ENCODE measurements at regions of chr1 and their contacts with region 1.

Region 1: DNA sequence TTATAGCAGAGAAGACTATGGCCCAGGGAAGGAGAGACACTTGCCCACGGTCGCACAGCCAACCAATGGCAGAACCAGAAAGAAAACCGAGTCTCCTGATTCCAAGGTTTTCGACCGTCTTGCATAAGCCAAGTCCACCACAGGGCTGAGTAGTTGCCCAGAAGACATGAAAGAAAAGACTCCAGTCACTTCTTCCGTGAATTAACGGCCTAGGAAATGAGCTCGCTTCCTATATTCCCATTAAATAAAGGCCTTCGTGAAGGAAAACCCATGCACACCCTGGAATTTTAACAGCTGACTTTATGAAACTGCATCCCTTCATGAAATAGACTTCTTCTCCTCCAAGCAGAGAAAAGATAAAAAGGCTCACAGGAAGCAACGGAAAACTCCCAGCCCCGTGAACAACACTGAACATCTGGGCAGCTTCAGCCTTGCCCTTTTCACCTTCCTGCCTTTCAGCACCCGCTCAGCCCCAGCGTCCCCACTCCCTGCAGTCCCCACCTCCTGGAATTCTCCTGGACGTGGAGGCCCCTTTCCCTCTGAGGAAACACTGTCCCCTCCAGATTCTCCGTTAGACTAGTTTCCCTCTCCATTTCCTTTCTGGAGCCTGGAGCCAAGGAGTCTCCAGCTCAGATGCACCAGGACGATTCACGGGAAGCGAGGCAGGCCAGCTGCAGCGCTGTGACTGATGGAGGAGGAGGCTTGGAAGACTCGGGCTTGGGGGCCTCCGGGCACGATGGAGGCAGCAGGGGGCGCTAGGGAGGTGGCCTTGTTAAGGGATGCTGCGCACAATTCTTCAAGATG is 2.7 kb upstream of the MYOC start:
- DNase-seq: peak; percentile 83
- H3K4me3 ChIP-seq: no peak overlapping the region
- H3K27ac ChIP-seq: no peak overlapping the region
- H3K4me1 ChIP-seq: peaks cover 4% of the 10 kb centered on the region
- H3K27me3 ChIP-seq: no peaks in the 10 kb centered on the region
- CTCF ChIP-seq: peak; percentile 95

Region 2: DNA sequence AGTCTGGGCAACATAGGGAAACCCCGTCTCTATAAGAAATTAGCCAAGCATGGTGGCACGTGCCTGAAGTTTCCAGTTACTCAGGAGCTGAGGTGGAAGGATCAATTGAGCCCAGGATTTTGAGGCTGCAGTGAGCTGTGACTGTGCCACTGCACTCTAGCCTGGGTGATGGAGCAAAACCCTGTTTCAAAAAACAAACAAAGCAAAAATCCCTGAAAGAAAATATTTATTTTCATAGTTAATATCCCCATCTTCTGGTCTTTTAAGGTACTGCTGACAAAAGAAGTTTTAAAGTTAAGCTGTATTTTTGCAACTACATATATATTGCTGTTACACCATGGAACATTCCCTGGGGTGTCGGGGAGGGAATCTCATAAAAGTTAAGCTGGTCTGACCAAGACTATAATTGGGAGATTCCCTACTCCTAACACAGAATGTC is 60.7 kb after region 1 on chr1:
- CTCF ChIA-PET with region 1: interaction called, 9 read pairs
- POLR2A ChIA-PET with region 1: no interaction called
- intact Hi-C with region 1: loop called (anchors 2 kb)
- DNase-seq: peak; percentile 63
- H3K4me3 ChIP-seq: no peak overlapping the region
- H3K27ac ChIP-seq: no peak overlapping the region
- H3K4me1 ChIP-seq: peaks cover 10% of the 10 kb centered on the region
- H3K27me3 ChIP-seq: no peaks in the 10 kb centered on the region
- CTCF ChIP-seq: peak; percentile 63

Region 3: DNA sequence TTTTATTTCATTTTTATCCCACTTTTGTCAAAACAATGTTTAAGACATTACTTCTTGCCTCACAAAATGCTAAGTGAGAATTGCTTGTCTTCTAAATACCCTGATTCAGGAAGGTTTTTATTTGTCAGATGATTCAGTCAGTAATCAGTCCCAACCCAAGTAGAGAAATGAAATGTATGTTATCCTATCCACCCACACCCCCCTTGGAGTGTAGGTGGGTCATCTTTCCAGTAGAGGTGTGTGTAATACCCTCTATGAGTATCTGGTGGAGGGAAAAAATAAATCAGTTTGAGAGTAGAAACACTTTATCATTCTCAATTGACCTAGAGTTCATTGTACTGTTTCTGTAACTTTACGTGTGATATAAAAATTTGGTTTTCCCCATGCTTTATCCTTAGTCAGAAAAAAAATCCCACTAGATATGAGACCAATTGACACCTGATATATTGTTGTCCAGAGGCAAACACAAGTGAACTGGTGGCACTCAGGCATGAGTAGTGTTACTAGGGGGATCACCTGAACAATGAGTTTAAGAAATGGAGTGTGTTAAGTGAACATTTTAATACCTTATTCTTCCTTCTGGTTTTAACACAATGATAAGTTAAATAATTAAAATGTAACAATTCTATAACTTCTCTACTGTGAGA is 611.5 kb after region 1 on chr1:
- CTCF ChIA-PET with region 1: no interaction called
- POLR2A ChIA-PET with region 1: no interaction called
- intact Hi-C with region 1: no loop called
- DNase-seq: no peak
- H3K4me3 ChIP-seq: no peak overlapping the region
- H3K27ac ChIP-seq: no peak overlapping the region
- H3K4me1 ChIP-seq: no peaks in the 10 kb centered on the region
- H3K27me3 ChIP-seq: no peaks in the 10 kb centered on the region
- CTCF ChIP-seq: no peak

Measured in A673 (cell line).